SK-N-SH (cell line): ENCODE measurements at regions of chr1 and their contacts with region 1.

Region 1: GRCh38 chr1:110106013-110106941 is 6.0 kb upstream of the UBL4B start:
- DNase-seq: peak; percentile 88
- H3K4me3 ChIP-seq: no peak overlapping the region; a peak in 1 of 4 replicates
- H3K27ac ChIP-seq: peak overlapping the region in 1 of 2 experiments; percentile 74; a peak in 2 of 4 replicates
- H3K4me1 ChIP-seq: peaks cover 0 to 72% of the 10 kb centered on the region in 2 experiments; a peak in 2 of 4 replicates
- H3K27me3 ChIP-seq: no peaks in the 10 kb centered on the region
- CTCF ChIP-seq: peak; percentile 92
- EP300 ChIP-seq: no peak
- RAD21 ChIP-seq: peak; percentile 95

Region 2: DNA sequence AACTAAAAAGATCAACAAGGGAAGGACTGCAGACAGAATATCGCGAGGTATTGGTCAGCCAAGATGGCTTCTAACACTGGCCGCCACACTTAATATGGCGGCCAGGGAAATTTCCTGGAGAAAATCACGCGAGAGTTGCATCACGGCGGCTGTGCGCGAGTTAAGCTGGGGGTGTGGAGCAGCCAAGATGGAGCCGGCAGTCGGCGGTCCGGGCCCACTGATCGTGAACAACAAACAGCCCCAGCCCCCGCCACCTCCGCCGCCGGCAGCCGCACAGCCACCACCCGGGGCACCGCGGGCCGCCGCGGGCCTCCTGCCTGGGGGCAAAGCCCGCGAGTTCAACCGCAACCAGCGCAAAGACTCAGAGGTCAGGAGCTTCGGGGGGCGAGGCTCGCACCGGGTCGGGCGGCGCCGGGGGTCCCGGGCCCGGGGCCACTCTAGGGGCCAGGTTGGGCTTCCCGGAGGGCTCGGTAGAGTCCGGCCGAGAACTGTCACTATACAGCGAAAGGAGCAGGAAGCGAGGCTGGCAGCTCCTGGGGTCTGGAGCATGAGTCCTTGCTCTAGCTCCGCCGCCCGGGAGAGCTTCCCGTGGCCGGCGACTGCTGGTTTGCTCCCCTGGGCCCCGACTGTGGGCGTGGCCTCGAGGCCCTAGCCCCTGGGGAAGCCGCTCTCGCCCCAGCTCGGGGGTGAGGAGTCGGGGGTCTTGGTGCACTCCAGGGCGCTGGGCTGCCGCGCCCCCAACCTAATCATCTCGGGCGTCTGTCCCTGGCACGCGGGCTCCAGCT is 71.6 kb before region 1 on chr1 and contains the start of gene STRIP1:
- CTCF ChIA-PET with region 1: interaction called, 1,768 read pairs
- POLR2A ChIA-PET with region 1: interaction called, 3 read pairs
- DNase-seq: peak; percentile 91
- H3K4me3 ChIP-seq: peak within 1 kb of the TSS; percentile 62 to 99
- H3K27ac ChIP-seq: peak within 1 kb of the TSS; percentile 89
- H3K4me1 ChIP-seq: peaks cover 4 to 9% of the 10 kb centered on the region in 2 experiments; a peak in 3 of 4 replicates
- H3K27me3 ChIP-seq: no peaks in the 10 kb centered on the region
- CTCF ChIP-seq: no peak
- EP300 ChIP-seq: no peak; a peak in 1 of 4 replicates
- RAD21 ChIP-seq: no peak
- polyA plus RNA-seq, gene STRIP1: 34.6 and 46.3 TPM in 2 replicates

Region 3: GRCh38 chr1:110070282-110070669 is 36.0 kb before region 1 on chr1:
- CTCF ChIA-PET with region 1: interaction called, 1,768 read pairs
- POLR2A ChIA-PET with region 1: no interaction called
- DNase-seq: no peak
- H3K4me3 ChIP-seq: no peak overlapping the region
- H3K27ac ChIP-seq: no peak overlapping the region
- H3K4me1 ChIP-seq: peaks cover 0 to 12% of the 10 kb centered on the region in 2 experiments; a peak in 2 of 4 replicates
- H3K27me3 ChIP-seq: no peaks in the 10 kb centered on the region; the same call in 1 of the 2 replicates
- CTCF ChIP-seq: no peak
- EP300 ChIP-seq: no peak
- RAD21 ChIP-seq: no peak

Region 4: GRCh38 chr1:110087812-110088738 is 18.2 kb before region 1 on chr1:
- CTCF ChIA-PET with region 1: interaction called, 187 read pairs
- POLR2A ChIA-PET with region 1: no interaction called
- DNase-seq: peak; percentile 84
- H3K4me3 ChIP-seq: no peak overlapping the region; a peak in 1 of 4 replicates
- H3K27ac ChIP-seq: peak overlapping the region in 1 of 2 experiments; percentile 64; a peak in 1 of 4 replicates
- H3K4me1 ChIP-seq: peaks cover 0 to 55% of the 10 kb centered on the region in 2 experiments; a peak in 2 of 4 replicates
- H3K27me3 ChIP-seq: no peaks in the 10 kb centered on the region
- CTCF ChIP-seq: peak; percentile 66
- EP300 ChIP-seq: no peak
- RAD21 ChIP-seq: peak; percentile 72

Region 5: DNA sequence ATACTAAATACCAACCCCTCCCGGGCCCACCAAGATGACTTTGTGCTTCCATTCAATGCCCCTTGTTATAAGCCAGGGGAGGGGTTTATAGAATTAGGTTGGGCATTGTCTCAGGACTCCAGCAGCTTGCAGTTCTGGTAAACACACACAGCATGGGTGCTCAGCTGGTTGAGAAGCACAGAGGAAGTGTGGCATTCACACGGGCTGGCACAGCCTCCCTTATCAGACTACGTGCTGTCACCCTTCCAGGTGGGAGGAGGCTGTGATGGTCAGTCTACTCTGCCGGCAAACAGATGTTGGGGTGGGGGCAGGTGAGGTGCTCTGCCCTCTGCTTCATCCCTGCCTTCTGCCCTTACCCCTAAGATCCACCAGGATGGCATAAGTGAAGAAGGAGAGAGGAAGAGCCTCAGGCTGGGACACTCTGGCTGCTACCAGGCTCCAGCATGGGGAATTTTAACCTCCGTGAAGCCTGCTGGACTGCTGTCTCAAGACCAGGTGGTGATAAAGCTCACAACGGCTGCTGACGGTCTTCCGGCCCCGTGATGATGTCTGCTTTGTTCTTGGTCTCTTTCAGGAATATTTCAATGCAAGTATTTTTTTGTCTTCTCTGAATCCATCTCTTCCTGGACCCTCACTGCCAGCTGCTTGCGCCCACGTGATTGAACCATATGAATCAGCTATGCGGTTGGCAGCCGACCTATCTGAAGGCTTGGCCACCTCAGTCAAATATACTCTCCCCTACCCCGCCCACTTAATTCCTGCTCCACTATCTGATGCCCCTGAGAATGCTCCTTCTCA is 29.2 kb after region 1 on chr1:
- CTCF ChIA-PET with region 1: interaction called, 10 read pairs
- POLR2A ChIA-PET with region 1: no interaction called
- DNase-seq: no peak
- H3K4me3 ChIP-seq: no peak overlapping the region
- H3K27ac ChIP-seq: no peak overlapping the region
- H3K4me1 ChIP-seq: peaks cover 0 to 33% of the 10 kb centered on the region in 2 experiments; a peak in 1 of 4 replicates
- H3K27me3 ChIP-seq: peaks cover 20% of the 10 kb centered on the region; the same call in 1 of the 2 replicates
- CTCF ChIP-seq: no peak
- EP300 ChIP-seq: no peak
- RAD21 ChIP-seq: no peak

Region 6: GRCh38 chr1:110176299-110176956 is 70.2 kb after region 1 on chr1:
- CTCF ChIA-PET with region 1: interaction called, 16 read pairs
- POLR2A ChIA-PET with region 1: no interaction called
- DNase-seq: peak; percentile 86
- H3K4me3 ChIP-seq: no peak overlapping the region
- H3K27ac ChIP-seq: peak overlapping the region in 1 of 2 experiments; percentile 92; a peak in 2 of 4 replicates
- H3K4me1 ChIP-seq: peaks cover 0 to 62% of the 10 kb centered on the region in 2 experiments; a peak in 2 of 4 replicates
- H3K27me3 ChIP-seq: no peaks in the 10 kb centered on the region
- CTCF ChIP-seq: no peak
- EP300 ChIP-seq: peak in 1 of 2 experiments; percentile 90; a peak in 2 of 4 replicates
- RAD21 ChIP-seq: no peak; the same call in 1 of the 2 replicates